Activated CD4-positive, alpha-beta memory T cell treated with anti-CD3 and anti-CD28 coated beads, Interleukin-2, amount 10 ng/mL, durations not matched to agents 7 days and 5 days (primary cell): ENCODE measurements at regions of chr4 and their contacts with region 1.

Region 1: GRCh38 chr4:16225863-16226815 is at the start of gene TAPT1:
- DNase-seq: peak; percentile 81
- H3K4me3 Mint-ChIP-seq: peak within 1 kb of the TSS; percentile 93
- H3K27ac Mint-ChIP-seq: peak within 1 kb of the TSS; percentile 90
- H3K4me1 Mint-ChIP-seq: peaks cover 43% of the 10 kb centered on the region
- H3K27me3 Mint-ChIP-seq: no peaks in the 10 kb centered on the region
- total RNA-seq, gene TAPT1: 44.2 to 52.6 TPM

Region 2: DNA sequence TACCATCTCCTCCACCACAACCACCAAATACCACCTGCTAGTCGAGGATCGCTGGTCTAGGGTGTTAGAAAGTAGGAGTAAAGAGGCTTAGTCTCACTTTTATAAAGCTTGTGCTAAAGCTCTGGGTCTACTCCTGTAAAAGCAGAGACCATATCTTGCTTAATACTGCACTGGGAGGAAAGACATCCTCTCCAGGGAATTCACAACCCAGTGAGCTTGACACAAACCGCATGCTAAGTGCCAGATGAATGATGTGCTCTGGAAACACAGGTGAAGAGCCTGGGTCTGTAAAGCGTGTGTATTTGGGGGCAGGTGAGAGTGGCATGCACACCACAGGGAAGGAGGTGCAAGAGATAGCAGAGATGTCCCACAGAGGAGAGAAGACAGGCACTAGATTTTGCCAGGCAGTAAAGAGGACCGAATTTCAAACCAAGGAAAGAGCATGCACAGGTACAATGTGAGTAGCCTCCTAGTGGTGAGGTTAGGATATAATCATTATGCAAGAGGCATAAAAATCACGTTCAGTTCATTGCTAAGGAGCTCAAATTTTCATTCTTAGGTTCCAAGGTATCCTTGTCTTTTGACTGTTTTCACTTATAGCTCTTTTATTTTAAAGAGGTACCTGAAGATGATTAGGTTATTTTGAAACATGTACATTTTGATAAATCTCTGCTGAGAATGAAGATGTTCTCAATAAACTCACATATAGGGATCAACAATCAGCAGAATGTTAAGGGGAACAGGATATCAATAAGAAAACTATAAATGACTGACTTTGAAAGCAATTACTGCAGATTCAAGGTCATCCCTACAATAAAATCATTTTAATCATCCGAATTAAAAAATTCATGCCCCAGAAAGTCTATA is 20.6 kb before region 1 on chr4:
- CTCF ChIA-PET with region 1: interaction called, 10 read pairs
- POLR2A ChIA-PET with region 1: interaction called, 15 read pairs
- DNase-seq: no peak
- H3K4me3 Mint-ChIP-seq: no peak overlapping the region
- H3K27ac Mint-ChIP-seq: no peak overlapping the region
- H3K4me1 Mint-ChIP-seq: peaks cover 23% of the 10 kb centered on the region
- H3K27me3 Mint-ChIP-seq: no peaks in the 10 kb centered on the region

Region 3: GRCh38 chr4:16212138-16212782 is 13.9 kb before region 1 on chr4:
- CTCF ChIA-PET with region 1: interaction called, 5 read pairs
- POLR2A ChIA-PET with region 1: interaction called, 15 read pairs
- DNase-seq: no peak
- H3K4me3 Mint-ChIP-seq: no peak overlapping the region
- H3K27ac Mint-ChIP-seq: no peak overlapping the region
- H3K4me1 Mint-ChIP-seq: peaks cover 49% of the 10 kb centered on the region
- H3K27me3 Mint-ChIP-seq: no peaks in the 10 kb centered on the region

Region 4: DNA sequence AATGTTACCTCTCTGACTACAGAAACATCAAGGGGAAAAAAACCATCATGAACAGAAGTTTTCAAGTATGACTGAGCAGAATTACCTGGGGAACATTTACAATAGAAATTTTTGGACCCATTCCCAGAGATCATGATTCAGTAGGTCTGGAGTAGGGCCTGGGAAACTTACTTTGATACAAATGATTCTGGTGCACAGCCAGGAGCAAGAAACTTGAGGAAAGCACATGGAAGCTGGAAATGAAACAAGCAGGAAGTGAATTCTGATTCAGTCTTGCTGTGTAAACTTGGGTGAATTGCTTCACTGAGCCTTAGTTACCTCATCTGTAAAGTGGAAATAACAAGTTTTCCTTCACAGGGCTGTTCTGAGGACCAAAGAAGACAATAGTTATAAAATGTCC is 192.7 kb after region 1 on chr4:
- CTCF ChIA-PET with region 1: no interaction called
- POLR2A ChIA-PET with region 1: no interaction called
- DNase-seq: no peak
- H3K4me3 Mint-ChIP-seq: no peak overlapping the region
- H3K27ac Mint-ChIP-seq: no peak overlapping the region
- H3K4me1 Mint-ChIP-seq: no peaks in the 10 kb centered on the region
- H3K27me3 Mint-ChIP-seq: no peaks in the 10 kb centered on the region